GM10248 (cell line): ENCODE measurements at regions of chr22 and their contacts with region 1.

Region 1: GRCh38 chr22:29553351-29554224 is at the start of gene THOC5:
- DNase-seq: peak; percentile 96
- CTCF ChIP-seq: peak; percentile 82

Region 2: GRCh38 chr22:29334696-29335344 is 218.8 kb before region 1 on chr22:
- CTCF ChIA-PET with region 1: no interaction called
- POLR2A ChIA-PET with region 1: interaction called, 11 read pairs
- DNase-seq: no peak
- CTCF ChIP-seq: no peak

Region 3: GRCh38 chr22:29456211-29456671 is 97.3 kb before region 1 on chr22:
- CTCF ChIA-PET with region 1: no interaction called
- POLR2A ChIA-PET with region 1: no interaction called
- DNase-seq: no peak
- CTCF ChIP-seq: no peak

Region 4: DNA sequence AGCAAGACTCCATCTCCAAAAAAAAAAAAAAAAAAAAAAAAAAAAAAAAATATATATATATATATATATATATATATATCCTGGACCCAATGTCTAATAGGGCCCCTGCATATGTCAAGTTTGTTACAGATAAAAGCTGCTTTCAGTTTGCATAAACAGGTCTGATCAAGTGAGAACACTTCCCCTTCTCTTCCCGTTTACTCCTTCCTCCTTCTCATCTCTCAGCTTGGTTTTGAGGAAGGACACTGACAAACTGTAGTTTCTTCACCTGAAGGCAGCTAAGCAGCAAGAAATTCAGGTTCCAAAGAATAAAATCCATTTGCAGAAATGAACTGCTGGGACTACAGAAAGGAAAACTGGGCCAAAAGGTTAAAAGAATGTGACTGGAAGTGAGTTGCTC is 11.7 kb before region 1 on chr22:
- CTCF ChIA-PET with region 1: interaction called, 12 read pairs
- POLR2A ChIA-PET with region 1: interaction called, 8 read pairs
- DNase-seq: no peak
- CTCF ChIP-seq: no peak

Region 5: GRCh38 chr22:29567338-29567737 is 13.8 kb after region 1 on chr22:
- CTCF ChIA-PET with region 1: interaction called, 13 read pairs
- POLR2A ChIA-PET with region 1: interaction called, 3 read pairs
- DNase-seq: no peak
- CTCF ChIP-seq: no peak

Region 6: GRCh38 chr22:29647954-29648737 is 94.6 kb after region 1 on chr22:
- CTCF ChIA-PET with region 1: no interaction called
- POLR2A ChIA-PET with region 1: no interaction called
- DNase-seq: no peak
- CTCF ChIP-seq: no peak